ENCODE measurements at regions of chr6 and their contacts with region 1.

Region 1: DNA sequence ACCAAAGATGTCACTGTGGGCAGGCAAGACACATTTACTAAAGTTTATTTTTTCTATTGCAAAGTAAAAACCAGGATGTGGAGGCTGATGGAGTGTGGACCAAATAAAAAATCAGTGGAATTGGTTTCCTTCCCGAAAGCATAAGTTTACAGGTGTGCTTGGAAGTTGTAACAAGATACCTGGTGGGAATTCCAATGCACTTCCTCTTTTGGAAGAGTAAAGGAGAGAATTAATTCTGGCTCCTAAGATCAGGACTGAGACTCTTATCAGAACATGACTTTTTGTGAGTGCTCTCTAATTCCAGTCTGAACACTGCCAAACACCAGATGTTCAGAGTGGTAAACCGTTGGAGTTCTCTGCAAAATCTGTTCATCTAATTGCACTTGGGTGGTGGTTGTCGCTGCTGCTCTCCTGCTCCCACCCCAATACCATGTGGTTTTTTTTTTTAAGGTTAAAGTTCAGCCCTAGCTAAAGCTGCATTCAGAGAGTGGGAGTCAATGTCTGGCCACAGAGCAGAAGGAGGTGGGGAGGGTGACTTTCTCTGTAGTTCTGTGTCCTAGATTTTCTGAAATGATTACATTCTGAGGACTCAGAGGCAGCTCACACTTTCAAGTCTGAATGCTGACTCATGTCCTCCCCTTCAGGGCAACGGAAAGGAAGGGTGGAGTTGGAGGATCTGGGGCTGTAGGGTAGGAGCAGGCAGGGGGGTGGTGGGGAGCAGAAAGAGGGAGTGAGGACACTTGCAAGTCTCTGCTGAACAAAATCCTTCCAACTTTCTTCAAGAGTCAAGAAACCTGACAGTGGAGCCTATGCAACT is 275.8 kb upstream of the PRDM1 start:
- DNase-seq: peak; percentile 82
- H3K4me3 Mint-ChIP-seq: no peak overlapping the region
- H3K27ac Mint-ChIP-seq: peak overlapping the region; percentile 53
- H3K4me1 Mint-ChIP-seq: peaks cover 42% of the 10 kb centered on the region
- H3K27me3 Mint-ChIP-seq: peaks cover 10% of the 10 kb centered on the region

Region 2: GRCh38 chr6:105793130-105793529 is 17.2 kb before region 1 on chr6:
- CTCF ChIA-PET with region 1: interaction called, 4 read pairs
- POLR2A ChIA-PET with region 1: no interaction called
- intact Hi-C with region 1: loop called (anchors 1 kb)
- DNase-seq: peak; percentile 30
- H3K4me3 Mint-ChIP-seq: no peak overlapping the region
- H3K27ac Mint-ChIP-seq: no peak overlapping the region
- H3K4me1 Mint-ChIP-seq: peaks cover 54% of the 10 kb centered on the region
- H3K27me3 Mint-ChIP-seq: peaks cover 4% of the 10 kb centered on the region

Region 3: GRCh38 chr6:105872246-105872645 is 61.9 kb after region 1 on chr6:
- CTCF ChIA-PET with region 1: no interaction called
- POLR2A ChIA-PET with region 1: no interaction called
- intact Hi-C with region 1: loop called (anchors 1 kb)
- DNase-seq: no peak
- H3K4me3 Mint-ChIP-seq: no peak overlapping the region
- H3K27ac Mint-ChIP-seq: no peak overlapping the region
- H3K4me1 Mint-ChIP-seq: peaks cover 12% of the 10 kb centered on the region
- H3K27me3 Mint-ChIP-seq: peaks cover 26% of the 10 kb centered on the region

Region 4: GRCh38 chr6:105880030-105880492 is 69.7 kb after region 1 on chr6:
- CTCF ChIA-PET with region 1: no interaction called
- POLR2A ChIA-PET with region 1: interaction called, 4 read pairs
- intact Hi-C with region 1: loop called (anchors 2 kb)
- DNase-seq: peak; percentile 75
- H3K4me3 Mint-ChIP-seq: peak overlapping the region; percentile 31
- H3K27ac Mint-ChIP-seq: peak overlapping the region; percentile 44
- H3K4me1 Mint-ChIP-seq: peaks cover 26% of the 10 kb centered on the region
- H3K27me3 Mint-ChIP-seq: peaks cover 37% of the 10 kb centered on the region

Region 5: DNA sequence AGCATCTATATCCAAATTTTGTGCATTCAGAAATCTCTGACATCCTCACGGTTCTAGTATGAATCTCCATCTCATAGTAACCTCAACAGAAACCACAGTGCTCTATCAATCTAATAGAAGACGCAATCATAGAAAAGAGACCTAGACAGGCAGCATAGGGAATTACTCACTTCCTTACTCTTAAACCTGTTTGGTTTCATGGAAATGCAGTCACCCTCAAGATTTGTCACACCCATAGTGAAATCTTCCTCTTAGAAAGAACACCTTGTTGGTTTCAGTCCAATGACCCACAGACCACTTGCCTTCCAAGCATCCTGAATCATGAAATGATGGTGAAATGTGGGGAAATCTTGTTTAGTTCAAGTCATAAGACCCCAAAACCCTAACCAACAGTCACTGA is 109.8 kb after region 1 on chr6:
- CTCF ChIA-PET with region 1: no interaction called
- POLR2A ChIA-PET with region 1: no interaction called
- intact Hi-C with region 1: loop called (anchors 1 kb)
- DNase-seq: peak; percentile 50
- H3K4me3 Mint-ChIP-seq: no peak overlapping the region
- H3K27ac Mint-ChIP-seq: peak overlapping the region; percentile 74
- H3K4me1 Mint-ChIP-seq: peaks cover 13% of the 10 kb centered on the region
- H3K27me3 Mint-ChIP-seq: peaks cover 7% of the 10 kb centered on the region

Region 6: GRCh38 chr6:106051226-106051625 is 240.9 kb after region 1 on chr6:
- CTCF ChIA-PET with region 1: no interaction called
- POLR2A ChIA-PET with region 1: no interaction called
- intact Hi-C with region 1: no loop called
- DNase-seq: no peak
- H3K4me3 Mint-ChIP-seq: no peak overlapping the region
- H3K27ac Mint-ChIP-seq: no peak overlapping the region
- H3K4me1 Mint-ChIP-seq: peaks cover 6% of the 10 kb centered on the region
- H3K27me3 Mint-ChIP-seq: no peaks in the 10 kb centered on the region